CD8-positive, alpha-beta T cell (primary cell): ENCODE measurements at regions of chr10 and their contacts with region 1.

Region 1: DNA sequence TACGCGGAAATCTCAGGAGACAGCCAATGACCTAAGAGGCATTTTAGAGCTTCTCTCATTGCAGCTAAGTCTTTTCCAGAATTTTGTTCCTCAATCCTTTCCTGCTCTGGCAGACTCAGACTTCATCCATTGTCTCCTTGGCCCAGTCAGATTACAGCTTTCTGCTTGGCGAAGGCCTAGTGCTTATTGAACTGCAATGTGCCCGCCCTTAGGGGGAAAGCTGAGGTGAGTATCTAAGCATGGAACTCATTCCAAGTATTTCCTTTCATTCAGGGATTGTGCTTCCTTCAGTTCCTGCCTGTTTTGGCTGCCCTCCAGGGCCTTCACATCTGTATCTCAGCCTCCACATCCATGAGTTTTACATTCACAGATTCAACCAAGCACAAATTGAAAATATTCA is 37.5 kb downstream of the PRLHR start:
- DNase-seq: no peak
- ATAC-seq: no peak
- H3K4me3 ChIP-seq: no peak overlapping the region
- H3K4me3 Mint-ChIP-seq: no peak overlapping the region
- H3K27ac ChIP-seq: no peak overlapping the region
- H3K27ac Mint-ChIP-seq: no peak overlapping the region
- H3K4me1 ChIP-seq: no peaks in the 10 kb centered on the region
- H3K4me1 Mint-ChIP-seq: no peaks in the 10 kb centered on the region
- H3K27me3 ChIP-seq: no peaks in the 10 kb centered on the region
- H3K27me3 Mint-ChIP-seq: peaks cover 20% of the 10 kb centered on the region
- CTCF ChIP-seq: no peak

Region 2: DNA sequence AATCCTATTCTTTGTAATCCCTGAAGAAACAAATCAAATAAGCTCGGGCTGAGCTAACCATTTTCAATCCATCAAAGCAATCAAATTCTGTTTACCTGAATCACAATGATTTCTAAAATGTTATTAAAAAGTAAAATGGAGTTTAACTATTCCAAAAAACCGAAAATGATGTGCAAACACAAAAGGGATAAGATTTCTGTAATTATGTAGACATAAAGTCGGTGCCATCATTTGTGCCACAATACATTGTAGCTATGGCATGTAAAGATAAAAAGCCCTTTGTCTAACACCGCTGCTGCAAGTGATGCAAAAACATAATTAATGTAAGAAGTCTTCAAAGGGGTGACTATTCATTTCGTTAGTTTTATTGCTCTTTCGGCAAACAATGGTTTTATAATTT is 90.7 kb before region 1 on chr10:
- CTCF ChIA-PET with region 1: no interaction called
- POLR2A ChIA-PET with region 1: no interaction called
- intact Hi-C with region 1: no loop called
- DNase-seq: no peak
- ATAC-seq: no peak
- H3K4me3 ChIP-seq: no peak overlapping the region
- H3K4me3 Mint-ChIP-seq: no peak overlapping the region
- H3K27ac ChIP-seq: no peak overlapping the region
- H3K27ac Mint-ChIP-seq: no peak overlapping the region
- H3K4me1 ChIP-seq: no peaks in the 10 kb centered on the region
- H3K4me1 Mint-ChIP-seq: no peaks in the 10 kb centered on the region
- H3K27me3 ChIP-seq: no peaks in the 10 kb centered on the region
- H3K27me3 Mint-ChIP-seq: peaks cover 39% of the 10 kb centered on the region
- CTCF ChIP-seq: no peak

Region 3: DNA sequence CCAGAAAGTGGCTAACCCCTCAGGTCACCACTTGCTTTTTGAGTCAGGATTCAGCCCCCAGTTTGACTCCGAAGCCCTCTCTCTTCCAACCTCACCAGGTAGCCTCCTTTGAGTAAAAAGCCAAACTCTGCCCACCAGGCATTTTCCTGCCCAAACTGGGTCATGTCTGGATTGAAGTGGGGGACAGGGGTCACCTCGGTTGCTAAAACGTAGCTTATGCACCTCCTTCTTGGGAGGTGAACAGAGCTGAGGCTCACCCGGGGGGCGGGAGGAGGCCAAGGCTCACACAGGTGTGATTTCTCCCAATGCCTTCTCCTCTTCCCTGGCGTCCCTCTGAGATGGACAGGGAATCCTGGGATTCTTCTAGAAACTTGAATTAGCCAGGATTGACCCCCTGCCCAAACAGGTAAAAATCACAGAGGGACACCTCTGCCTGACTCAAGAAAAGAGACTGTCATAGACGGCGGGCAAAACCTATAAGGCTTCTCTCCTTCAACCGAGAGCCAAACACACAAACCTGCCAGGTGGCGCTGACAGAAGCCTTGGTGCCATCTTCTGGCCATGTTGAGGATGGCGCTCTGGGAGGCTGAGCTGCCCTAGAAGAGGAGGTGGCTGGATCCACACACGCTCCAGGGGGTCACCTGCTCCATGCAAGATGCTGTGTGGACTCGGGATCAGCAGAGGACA is 14.1 kb before region 1 on chr10:
- CTCF ChIA-PET with region 1: interaction called, 12 read pairs
- POLR2A ChIA-PET with region 1: interaction called, 3 read pairs
- intact Hi-C with region 1: no loop called
- DNase-seq: peak in 6 of 9 experiments; percentile 14 to 48 (median 32)
- ATAC-seq: peak; percentile 52
- H3K4me3 ChIP-seq: no peak overlapping the region
- H3K4me3 Mint-ChIP-seq: no peak overlapping the region
- H3K27ac ChIP-seq: no peak overlapping the region
- H3K27ac Mint-ChIP-seq: no peak overlapping the region
- H3K4me1 ChIP-seq: no peaks in the 10 kb centered on the region
- H3K4me1 Mint-ChIP-seq: no peaks in the 10 kb centered on the region
- H3K27me3 ChIP-seq: peaks cover 0 to 12% of the 10 kb centered on the region in 2 experiments
- H3K27me3 Mint-ChIP-seq: peaks cover 41% of the 10 kb centered on the region
- CTCF ChIP-seq: peak; percentile 38

Region 4: GRCh38 chr10:118584181-118584954 is 26.4 kb after region 1 on chr10:
- CTCF ChIA-PET with region 1: no interaction called
- POLR2A ChIA-PET with region 1: no interaction called
- intact Hi-C with region 1: no loop called
- DNase-seq: no peak
- ATAC-seq: no peak
- H3K4me3 ChIP-seq: no peak overlapping the region
- H3K4me3 Mint-ChIP-seq: no peak overlapping the region
- H3K27ac ChIP-seq: no peak overlapping the region
- H3K27ac Mint-ChIP-seq: no peak overlapping the region
- H3K4me1 ChIP-seq: no peaks in the 10 kb centered on the region
- H3K4me1 Mint-ChIP-seq: no peaks in the 10 kb centered on the region
- H3K27me3 ChIP-seq: no peaks in the 10 kb centered on the region
- H3K27me3 Mint-ChIP-seq: no peaks in the 10 kb centered on the region
- CTCF ChIP-seq: no peak